Activated T-helper 2 cell treated with anti-CD3 and anti-CD28 coated beads, Interferon-gamma antibody, Interleukin-2, Interleukin-4, amounts not matched to agents 10 μg/mL and 5 μg/mL and 100 μg/mL, durations not matched to agents 14 hours and 24 hours and 36 hours (primary cell): ENCODE measurements at regions of chr12 and their contacts with region 1.

Region 1: DNA sequence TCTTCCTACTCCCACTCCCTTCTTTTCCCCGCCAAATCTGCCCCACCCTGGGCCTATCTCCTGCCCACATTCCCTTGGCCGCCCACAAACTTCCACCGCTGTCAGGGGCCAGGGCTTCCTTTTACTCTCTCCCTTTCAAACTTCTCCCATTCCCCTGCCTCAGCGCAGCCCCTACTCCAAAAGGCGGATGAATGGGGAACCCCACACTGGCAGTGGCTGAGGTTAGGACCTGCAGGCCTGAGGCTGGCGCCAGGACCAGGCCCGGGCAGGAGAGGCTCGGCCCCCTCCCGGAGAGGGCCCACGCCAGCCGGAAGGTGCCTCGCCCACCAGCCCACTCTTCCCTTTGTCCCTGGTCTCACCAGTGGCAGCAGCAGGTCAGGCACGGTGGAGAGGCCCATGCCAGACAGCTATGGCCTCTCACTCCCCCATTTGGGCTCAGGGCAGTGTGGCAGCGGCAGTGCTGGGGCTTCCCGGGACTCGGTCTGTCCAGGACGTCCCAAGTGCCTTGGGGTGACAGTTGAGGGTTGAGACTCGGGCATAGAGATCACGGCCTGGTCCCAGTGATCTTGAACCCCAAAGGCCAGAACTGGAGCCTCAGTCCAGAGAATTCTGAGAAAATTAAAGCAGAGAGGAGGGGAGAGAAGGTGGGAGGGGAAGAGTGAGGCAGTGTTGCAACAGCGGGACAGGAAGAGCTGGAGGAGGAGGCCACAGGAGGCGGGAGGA is at the start of gene TNFRSF1A:
- DNase-seq: no peak
- H3K4me3 Mint-ChIP-seq: no peak within 1 kb of the TSS
- H3K27ac Mint-ChIP-seq: no peak within 1 kb of the TSS
- H3K4me1 Mint-ChIP-seq: peaks cover 37% of the 10 kb centered on the region
- H3K27me3 Mint-ChIP-seq: no peaks in the 10 kb centered on the region
- total RNA-seq, gene TNFRSF1A: 37.6 TPM in 2 replicates

Region 2: DNA sequence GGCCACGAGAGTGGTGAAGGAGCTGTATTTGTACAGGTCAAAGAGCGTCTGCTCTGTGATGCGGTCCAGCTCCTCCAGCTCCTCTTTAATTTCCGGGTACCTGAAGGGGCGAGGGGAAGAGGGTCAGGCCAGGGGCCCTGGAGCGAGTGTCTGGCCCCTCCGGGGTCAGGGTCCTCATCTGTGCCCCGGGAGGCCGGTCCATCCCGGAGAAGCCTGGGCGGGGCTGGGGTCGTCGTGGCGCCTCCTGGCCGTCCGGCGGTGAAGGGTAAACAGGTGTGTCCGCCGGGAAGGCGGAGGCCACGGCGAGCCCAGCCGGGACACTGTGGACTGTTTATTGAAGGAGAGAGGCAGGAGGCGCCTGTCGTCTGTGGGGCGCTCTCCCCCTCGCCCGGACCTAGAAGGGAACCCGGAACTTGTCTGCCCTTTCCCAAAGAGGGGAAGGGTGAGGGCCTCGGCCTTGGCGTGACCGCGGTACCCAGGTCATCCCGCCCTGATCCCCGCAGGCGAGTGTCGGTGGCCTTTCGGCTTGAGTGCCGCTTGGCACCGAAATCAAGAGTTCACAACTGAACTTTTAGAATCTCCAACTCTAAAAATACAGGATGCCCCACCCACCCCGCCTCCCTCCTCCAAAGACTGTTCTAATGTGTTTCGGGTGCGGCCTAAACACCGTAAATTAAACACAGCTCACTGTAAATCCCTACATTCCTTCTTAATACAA is 22.2 kb after region 1 on chr12:
- intact Hi-C with region 1: loop called (anchors 2 kb)
- DNase-seq: no peak
- H3K4me3 Mint-ChIP-seq: peak overlapping the region; percentile 60
- H3K27ac Mint-ChIP-seq: no peak overlapping the region
- H3K4me1 Mint-ChIP-seq: peaks cover 31% of the 10 kb centered on the region
- H3K27me3 Mint-ChIP-seq: peaks cover 3% of the 10 kb centered on the region

Region 3: GRCh38 chr12:6540181-6540877 is 198.8 kb after region 1 on chr12:
- intact Hi-C with region 1: no loop called
- DNase-seq: peak; percentile 51
- H3K4me3 Mint-ChIP-seq: peak overlapping the region; percentile 67
- H3K27ac Mint-ChIP-seq: peak overlapping the region; percentile 73
- H3K4me1 Mint-ChIP-seq: peaks cover 49% of the 10 kb centered on the region
- H3K27me3 Mint-ChIP-seq: no peaks in the 10 kb centered on the region